Activated CD8-positive, alpha-beta T cell treated with anti-CD3 and anti-CD28 coated beads, Interleukin-2, amount 10 ng/mL, durations not matched to agents 7 days and 5 days (primary cell): ENCODE measurements at regions of chr19 and their contacts with region 1.

Region 1: GRCh38 chr19:47436712-47437401 is 17.5 kb upstream of the MEIS3 start:
- DNase-seq: peak; percentile 90
- ATAC-seq: peak; percentile 88
- H3K4me3 Mint-ChIP-seq: no peak overlapping the region
- H3K27ac Mint-ChIP-seq: peak overlapping the region; percentile 27
- H3K4me1 Mint-ChIP-seq: peaks cover 53% of the 10 kb centered on the region
- H3K27me3 Mint-ChIP-seq: peaks cover 13% of the 10 kb centered on the region

Region 2: GRCh38 chr19:47447470-47448359 is 10.9 kb after region 1 on chr19:
- CTCF ChIA-PET with region 1: interaction called, 28 read pairs
- POLR2A ChIA-PET with region 1: interaction called, 3 read pairs
- DNase-seq: peak; percentile 75
- ATAC-seq: peak; percentile 71
- H3K4me3 Mint-ChIP-seq: peak overlapping the region; percentile 53
- H3K27ac Mint-ChIP-seq: peak overlapping the region; percentile 18
- H3K4me1 Mint-ChIP-seq: peaks cover 45% of the 10 kb centered on the region
- H3K27me3 Mint-ChIP-seq: peaks cover 59% of the 10 kb centered on the region

Region 3: GRCh38 chr19:47483800-47484690 is 47.2 kb after region 1 on chr19 and contains the start of gene KPTN:
- CTCF ChIA-PET with region 1: interaction called, 23 read pairs
- POLR2A ChIA-PET with region 1: interaction called, 14 read pairs
- DNase-seq: peak; percentile 93
- ATAC-seq: peak; percentile 91
- H3K4me3 Mint-ChIP-seq: peak within 1 kb of the TSS; percentile 97
- H3K27ac Mint-ChIP-seq: peak within 1 kb of the TSS; percentile 100
- H3K4me1 Mint-ChIP-seq: peaks cover 42% of the 10 kb centered on the region
- H3K27me3 Mint-ChIP-seq: no peaks in the 10 kb centered on the region
- total RNA-seq, gene KPTN: 12.6 to 13.0 TPM

Region 4: DNA sequence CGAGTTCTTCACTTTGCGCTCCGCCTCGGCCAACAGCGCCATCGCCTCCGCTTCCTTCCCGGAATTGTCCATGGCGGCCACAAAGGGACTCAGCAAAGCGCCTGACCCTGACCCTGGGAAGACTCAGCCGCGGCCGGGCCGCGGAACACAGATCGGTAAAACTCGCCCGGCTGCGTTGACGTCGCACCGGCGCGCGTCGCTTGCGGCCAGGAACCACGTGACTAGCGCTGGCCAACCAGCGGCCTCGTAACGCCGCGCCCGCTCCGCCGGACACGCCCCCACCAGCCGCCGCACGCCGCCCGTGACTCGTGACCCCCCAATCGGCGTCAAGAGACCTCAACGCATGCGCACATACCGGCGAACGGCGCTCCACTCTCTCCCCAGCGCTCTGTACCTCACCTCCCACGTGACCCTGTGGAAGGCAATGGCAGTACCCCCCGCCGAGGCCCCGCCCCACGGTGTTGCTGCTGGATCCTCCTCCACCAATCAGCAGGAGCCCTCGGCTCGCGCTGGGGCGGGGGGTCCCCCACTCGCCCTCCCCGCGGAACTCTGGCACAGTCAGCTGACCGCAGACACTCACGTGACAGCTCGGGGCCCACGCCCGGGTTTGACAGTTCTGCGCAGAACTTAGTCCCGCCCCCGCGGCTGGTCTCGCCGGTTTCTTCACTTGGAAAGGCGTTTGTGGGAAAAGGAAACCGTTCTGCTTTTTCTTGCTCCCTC is 78.2 kb after region 1 on chr19 and contains the start of gene NAPA:
- CTCF ChIA-PET with region 1: interaction called, 16 read pairs
- POLR2A ChIA-PET with region 1: no interaction called
- DNase-seq: peak; percentile 100
- ATAC-seq: peak; percentile 96
- H3K4me3 Mint-ChIP-seq: peak within 1 kb of the TSS; percentile 94
- H3K27ac Mint-ChIP-seq: peak within 1 kb of the TSS; percentile 96
- H3K4me1 Mint-ChIP-seq: peaks cover 81% of the 10 kb centered on the region
- H3K27me3 Mint-ChIP-seq: peaks cover 11% of the 10 kb centered on the region
- total RNA-seq, gene NAPA: 90.0 to 103 TPM

Region 5: DNA sequence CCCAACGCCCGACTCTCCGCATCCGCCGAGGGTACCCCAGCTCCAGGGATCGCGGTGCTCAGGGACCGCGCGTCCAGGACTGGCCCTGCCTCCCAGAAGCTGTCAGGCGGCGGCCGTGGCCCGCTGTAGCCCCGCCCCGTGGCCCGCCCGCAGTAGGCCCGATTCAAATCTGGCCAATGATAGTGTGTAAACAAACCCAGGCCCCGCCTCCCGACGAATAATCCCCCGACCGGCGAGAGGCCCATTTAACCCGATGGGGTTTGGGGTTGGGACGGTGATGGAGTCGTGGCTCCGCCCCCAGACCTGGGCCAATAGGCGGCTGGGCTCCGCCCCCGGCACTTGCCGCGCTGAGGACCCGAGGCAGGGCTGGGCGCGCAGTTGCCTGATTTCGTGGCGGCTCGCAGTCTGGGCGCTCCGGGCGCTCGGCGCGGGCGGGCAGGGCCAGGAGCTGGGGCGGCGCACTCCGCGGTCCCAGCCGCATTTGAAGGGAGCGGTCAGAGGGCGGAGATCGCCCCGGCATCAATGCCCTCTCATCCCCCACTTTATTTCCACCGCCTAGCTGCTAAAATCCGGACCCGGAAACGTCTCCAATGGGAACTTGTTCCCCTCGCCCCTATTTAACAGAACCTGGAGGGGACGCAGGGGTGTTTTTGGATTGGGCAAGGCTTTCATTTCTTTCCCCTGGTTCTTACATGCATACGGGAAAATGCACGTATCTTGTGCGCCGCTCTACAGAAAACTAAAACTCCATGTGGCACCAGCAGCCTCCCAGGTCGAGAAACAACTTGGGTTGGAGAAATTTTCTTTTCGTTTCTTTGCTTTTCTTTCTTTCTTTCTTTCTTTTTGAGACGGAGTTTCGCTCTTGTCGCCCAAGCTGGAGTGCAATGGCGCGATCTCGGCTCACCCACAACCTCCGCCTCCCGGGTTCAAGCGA is 163.7 kb after region 1 on chr19:
- CTCF ChIA-PET with region 1: interaction called, 18 read pairs
- POLR2A ChIA-PET with region 1: interaction called, 4 read pairs
- DNase-seq: peak; percentile 100
- ATAC-seq: peak; percentile 98
- H3K4me3 Mint-ChIP-seq: peak overlapping the region; percentile 82
- H3K27ac Mint-ChIP-seq: peak overlapping the region; percentile 91
- H3K4me1 Mint-ChIP-seq: peaks cover 53% of the 10 kb centered on the region
- H3K27me3 Mint-ChIP-seq: peaks cover 2% of the 10 kb centered on the region

Region 6: DNA sequence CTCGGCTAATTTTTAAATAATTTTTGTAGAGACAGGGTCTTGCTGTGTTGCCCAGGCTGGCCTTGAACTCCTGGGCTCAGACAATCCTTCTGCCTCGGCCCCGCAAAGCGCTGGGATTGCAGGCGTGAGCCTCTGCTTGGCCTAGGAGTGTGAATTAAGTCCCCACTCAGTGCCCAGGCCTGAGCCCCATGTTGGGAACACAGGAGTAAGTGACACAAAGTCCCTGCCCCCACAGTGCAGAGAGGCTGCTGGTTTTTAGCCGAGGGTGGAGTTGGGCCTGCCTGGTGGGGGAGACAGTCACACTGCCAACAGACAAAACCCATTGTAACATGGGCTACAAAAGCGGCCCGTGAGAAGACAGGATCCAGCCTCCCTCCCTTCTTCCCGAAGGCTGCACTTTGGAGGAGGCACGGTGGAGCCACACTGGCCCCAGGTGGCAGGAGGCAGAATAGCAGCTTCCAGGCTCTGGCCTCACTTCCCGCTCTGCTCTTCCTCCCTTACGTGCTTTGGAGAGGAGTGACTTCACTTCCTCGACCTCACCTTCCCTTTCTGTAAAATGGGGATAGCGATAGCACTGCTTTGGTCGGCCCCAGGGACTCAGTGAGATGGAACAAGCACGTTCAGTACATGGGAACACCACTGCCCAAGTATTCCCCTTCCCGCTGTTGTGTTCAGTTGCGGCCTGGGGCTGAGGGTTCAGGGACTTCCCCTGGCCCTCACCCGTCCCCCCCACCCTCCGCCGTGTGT is 261.2 kb after region 1 on chr19:
- CTCF ChIA-PET with region 1: interaction called, 118 read pairs
- POLR2A ChIA-PET with region 1: interaction called, 3 read pairs
- DNase-seq: peak; percentile 65
- ATAC-seq: peak; percentile 65
- H3K4me3 Mint-ChIP-seq: no peak overlapping the region
- H3K27ac Mint-ChIP-seq: no peak overlapping the region
- H3K4me1 Mint-ChIP-seq: peaks cover 2% of the 10 kb centered on the region
- H3K27me3 Mint-ChIP-seq: no peaks in the 10 kb centered on the region

Region 7: DNA sequence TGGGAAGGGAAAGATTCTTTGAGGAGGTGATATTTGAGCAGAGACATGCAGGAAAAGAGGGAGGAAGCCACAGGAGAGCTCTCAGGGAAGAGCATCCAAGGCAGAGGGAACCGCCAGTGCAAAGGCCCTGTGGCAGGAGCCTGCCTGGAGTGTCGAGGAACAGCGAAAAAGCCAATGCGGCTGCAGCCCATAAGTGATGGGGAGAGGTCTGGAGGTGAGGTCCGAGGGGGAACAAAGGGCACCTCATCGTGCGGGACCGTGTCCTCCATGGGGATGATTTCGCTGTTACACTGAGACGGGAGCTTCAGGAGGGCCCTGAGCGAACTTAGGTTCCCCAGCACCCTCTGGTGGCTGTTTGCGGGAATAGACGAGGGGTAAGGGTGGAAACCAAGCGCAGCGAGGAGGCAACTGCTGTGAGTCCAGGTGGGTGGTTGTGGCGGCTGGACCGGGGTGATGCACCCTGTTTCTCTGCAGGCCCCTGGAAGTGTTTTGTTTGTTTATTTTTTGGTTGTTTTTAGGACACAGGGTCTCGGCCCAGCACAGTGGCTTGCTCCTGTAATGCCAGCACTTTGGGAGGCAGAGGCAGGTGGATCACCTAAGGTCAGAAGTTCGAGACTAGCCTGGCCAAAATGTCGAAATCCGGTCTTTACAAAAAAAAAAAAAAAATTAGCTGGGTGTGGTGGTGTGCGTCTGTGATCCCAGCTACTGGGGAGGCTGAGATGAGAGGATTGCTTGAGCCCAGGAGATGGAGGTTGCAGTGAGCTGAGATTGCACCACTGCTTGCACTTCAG is 270.5 kb after region 1 on chr19:
- CTCF ChIA-PET with region 1: interaction called, 118 read pairs
- POLR2A ChIA-PET with region 1: interaction called, 10 read pairs
- DNase-seq: peak; percentile 87
- ATAC-seq: peak; percentile 96
- H3K4me3 Mint-ChIP-seq: no peak overlapping the region
- H3K27ac Mint-ChIP-seq: no peak overlapping the region
- H3K4me1 Mint-ChIP-seq: peaks cover 5% of the 10 kb centered on the region
- H3K27me3 Mint-ChIP-seq: peaks cover 5% of the 10 kb centered on the region